ENCODE measurements at regions of chr17 and their contacts with region 1.

Region 1: GRCh38 chr17:28446728-28447395 is 26.6 kb upstream of the SLC13A2 start:
- DNase-seq: no peak
- ATAC-seq: no peak
- H3K4me3 ChIP-seq: no peak overlapping the region
- H3K27ac ChIP-seq: no peak overlapping the region
- H3K4me1 ChIP-seq: no peaks in the 10 kb centered on the region
- H3K27me3 ChIP-seq: peaks cover 8% of the 10 kb centered on the region; the same call in 1 of the 2 replicates
- CTCF ChIP-seq: no peak

Region 2: DNA sequence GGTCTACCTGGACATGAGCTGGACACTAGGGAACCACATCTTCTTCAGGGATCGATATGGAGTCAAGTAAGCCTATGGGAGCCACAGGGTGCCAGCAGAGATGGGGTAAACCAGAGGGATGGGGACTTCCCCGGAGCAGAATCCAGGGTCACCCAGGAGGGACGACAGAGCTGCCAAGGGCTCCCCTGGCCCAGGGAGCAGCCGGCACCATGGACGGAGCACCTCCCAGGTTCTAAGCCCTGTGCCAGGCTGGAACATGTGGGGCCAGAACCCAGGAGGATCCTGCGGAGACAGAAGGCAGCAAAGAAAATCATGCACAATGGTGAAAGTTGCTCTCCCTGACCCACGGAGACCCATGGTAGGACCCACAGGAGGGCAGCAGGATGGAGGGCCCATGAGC is 1024.3 kb before region 1 on chr17:
- CTCF ChIA-PET with region 1: interaction called, 10 read pairs
- POLR2A ChIA-PET with region 1: no interaction called
- in situ Hi-C with region 1: no loop called
- intact Hi-C with region 1: no loop called
- DNase-seq: no peak
- ATAC-seq: no peak
- H3K4me3 ChIP-seq: no peak overlapping the region
- H3K27ac ChIP-seq: no peak overlapping the region
- H3K4me1 ChIP-seq: no peaks in the 10 kb centered on the region
- H3K27me3 ChIP-seq: no peaks in the 10 kb centered on the region
- CTCF ChIP-seq: no peak

Measured in Panc1 (cell line).